AG04449 (cell line): ENCODE measurements at regions of chr2 and their contacts with region 1.

Region 1: DNA sequence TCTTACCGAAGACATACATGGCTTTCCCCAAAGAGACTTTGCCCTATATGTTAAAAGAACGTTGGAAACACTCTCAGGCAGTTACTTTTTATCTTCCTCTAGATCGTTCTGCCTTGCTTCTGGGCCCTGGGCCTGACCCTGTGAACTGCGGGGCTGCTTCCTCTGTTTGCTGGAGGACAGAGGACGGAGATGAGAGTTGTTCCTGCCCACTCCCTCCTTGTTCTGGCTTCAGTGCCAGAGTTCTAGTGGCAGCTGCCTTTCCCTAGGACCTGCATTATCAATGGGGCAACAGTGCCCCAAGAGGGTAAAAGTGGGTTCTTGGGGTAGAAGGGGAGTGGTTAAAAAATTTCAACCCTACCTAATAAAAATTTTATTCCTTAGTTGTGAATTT is 6.5 kb upstream of the FN1 start:
- DNase-seq: no peak
- H3K4me3 ChIP-seq: no peak overlapping the region
- CTCF ChIP-seq: no peak

Region 2: DNA sequence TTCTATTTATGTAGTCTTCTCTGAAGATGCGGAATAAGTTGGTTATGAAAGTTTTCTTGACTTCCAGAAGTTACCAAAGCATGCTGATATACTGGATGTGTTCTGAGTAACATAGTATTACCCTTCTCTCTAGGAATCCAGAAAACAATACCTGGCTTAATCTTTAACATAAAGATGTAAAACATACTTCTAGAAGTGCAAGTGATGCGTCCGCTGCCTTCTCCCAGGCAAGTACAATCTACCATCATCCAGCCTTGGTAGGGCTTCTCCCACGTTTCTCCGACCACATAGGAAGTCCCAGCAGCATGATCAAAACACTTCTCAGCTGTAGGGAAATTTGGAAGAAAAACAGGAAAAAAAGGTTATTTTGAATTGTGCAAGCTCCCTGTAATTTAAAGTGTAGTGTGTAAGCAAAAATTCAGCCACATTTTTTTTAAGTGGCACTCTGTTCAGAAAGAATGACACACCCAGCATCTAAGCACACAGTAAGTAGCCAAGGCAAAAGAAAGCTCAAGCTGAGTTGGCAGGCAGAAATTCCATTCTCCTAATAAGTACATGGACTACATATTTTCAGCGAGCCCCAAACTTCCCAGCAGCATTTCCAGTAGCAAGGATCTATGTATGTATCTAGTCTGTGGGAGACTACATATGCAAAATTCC is 11.7 kb before region 1 on chr2:
- CTCF ChIA-PET with region 1: no interaction called
- POLR2A ChIA-PET with region 1: no interaction called
- DNase-seq: peak; percentile 59
- H3K4me3 ChIP-seq: peak overlapping the region; percentile 91
- CTCF ChIP-seq: no peak

Region 3: GRCh38 chr2:215454519-215455246 is 12.3 kb after region 1 on chr2:
- CTCF ChIA-PET with region 1: interaction called, 72 read pairs
- POLR2A ChIA-PET with region 1: no interaction called
- DNase-seq: no peak
- H3K4me3 ChIP-seq: no peak overlapping the region
- CTCF ChIP-seq: peak; percentile 55